Breast epithelium (tissue), 4 donors: ENCODE measurements at regions of chr18 and their contacts with region 1.

Region 1: DNA sequence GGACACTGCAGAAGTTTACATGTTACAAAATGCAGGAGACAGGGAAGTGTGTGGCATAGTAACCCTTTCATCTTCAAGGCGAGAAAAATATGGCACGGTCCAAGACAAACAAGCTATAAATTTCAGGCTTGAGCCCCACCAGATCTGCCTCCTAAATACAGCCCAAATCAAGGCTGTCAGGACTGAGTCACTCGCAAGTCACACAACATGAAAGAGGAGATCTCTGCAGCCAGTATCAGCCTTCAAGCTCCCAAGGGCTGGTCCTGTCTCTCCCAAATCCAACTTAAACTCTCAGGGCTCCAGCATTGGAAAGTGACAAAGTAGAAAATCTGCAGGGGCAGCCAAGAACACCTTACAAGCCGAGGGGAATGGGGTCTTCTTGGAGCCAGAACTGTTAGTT is 106.3 kb upstream of the GATA6 start:
- DNase-seq: no peak
- H3K4me3 ChIP-seq: no peak overlapping the region
- H3K27ac ChIP-seq: no peak overlapping the region
- H3K4me1 ChIP-seq: no peaks in the 10 kb centered on the region
- H3K27me3 ChIP-seq: no peaks in the 10 kb centered on the region
- CTCF ChIP-seq: no peak
- POLR2A ChIP-seq: no peak

Region 2: DNA sequence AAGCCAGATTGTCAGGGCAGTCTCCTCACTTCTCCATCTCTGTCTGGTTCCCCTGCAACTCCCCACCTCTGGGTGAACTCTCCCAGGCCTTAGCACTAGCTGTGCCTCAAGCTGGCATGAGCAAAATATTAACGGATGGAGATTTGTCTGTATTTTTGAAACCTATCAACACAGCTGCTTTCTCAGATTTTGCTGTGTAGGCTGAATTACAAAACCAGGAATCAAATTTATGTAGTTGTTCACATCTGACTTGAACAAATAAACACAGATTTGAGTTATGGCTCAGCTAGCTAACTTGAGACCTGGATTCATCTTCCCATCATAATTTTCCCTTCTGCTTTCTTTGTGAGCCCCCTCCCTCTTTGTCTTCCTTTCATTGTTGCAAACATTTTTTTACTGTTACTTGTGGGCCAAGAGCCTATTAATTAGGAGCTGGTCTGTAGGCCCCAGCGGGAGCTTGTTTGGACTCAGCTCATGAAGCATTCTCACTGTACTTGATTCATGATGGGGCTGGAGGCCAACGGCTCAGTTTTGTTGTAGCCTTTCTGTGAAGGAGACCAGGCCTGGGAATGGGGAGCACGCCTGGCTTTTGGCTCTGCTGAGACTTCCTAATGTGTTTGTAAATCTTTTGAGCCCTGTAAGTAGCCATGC is 57.8 kb before region 1 on chr18:
- intact Hi-C with region 1: no loop called
- DNase-seq: no peak
- H3K4me3 ChIP-seq: no peak overlapping the region
- H3K27ac ChIP-seq: no peak overlapping the region
- H3K4me1 ChIP-seq: no peaks in the 10 kb centered on the region
- H3K27me3 ChIP-seq: no peaks in the 10 kb centered on the region
- CTCF ChIP-seq: no peak
- POLR2A ChIP-seq: no peak

Region 3: GRCh38 chr18:22136395-22136794 is 73.3 kb after region 1 on chr18:
- intact Hi-C with region 1: loop called (anchors 5 kb)
- DNase-seq: no peak
- H3K4me3 ChIP-seq: no peak overlapping the region
- H3K27ac ChIP-seq: no peak overlapping the region
- H3K4me1 ChIP-seq: no peaks in the 10 kb centered on the region
- H3K27me3 ChIP-seq: no peaks in the 10 kb centered on the region
- CTCF ChIP-seq: no peak
- POLR2A ChIP-seq: no peak